Cardiac septum (tissue), 1 donor: ENCODE measurements at regions of chr2 and their contacts with region 1.

Region 1: GRCh38 chr2:187499941-187500532 is 52.0 kb upstream of the CALCRL start:
- DNase-seq: no peak

Region 2: DNA sequence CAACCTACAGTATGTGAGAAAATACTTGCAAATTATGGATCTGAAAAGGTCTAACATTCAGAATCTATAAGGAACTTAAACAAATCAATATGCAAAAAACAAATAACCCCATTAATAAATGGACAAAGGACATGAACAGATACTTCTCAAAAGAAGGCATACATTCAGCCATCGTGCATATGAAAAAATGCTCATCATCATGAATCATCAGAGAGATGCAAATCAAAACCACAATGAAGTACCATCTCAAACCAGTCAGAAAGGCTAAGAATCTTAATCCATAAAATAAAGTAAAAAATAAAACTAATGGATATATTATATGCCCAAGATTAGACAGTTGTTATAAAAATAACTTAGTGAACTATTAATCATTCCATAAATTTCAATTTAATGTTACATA is 206.0 kb before region 1 on chr2:
- intact Hi-C with region 1: no loop called
- DNase-seq: no peak

Region 3: DNA sequence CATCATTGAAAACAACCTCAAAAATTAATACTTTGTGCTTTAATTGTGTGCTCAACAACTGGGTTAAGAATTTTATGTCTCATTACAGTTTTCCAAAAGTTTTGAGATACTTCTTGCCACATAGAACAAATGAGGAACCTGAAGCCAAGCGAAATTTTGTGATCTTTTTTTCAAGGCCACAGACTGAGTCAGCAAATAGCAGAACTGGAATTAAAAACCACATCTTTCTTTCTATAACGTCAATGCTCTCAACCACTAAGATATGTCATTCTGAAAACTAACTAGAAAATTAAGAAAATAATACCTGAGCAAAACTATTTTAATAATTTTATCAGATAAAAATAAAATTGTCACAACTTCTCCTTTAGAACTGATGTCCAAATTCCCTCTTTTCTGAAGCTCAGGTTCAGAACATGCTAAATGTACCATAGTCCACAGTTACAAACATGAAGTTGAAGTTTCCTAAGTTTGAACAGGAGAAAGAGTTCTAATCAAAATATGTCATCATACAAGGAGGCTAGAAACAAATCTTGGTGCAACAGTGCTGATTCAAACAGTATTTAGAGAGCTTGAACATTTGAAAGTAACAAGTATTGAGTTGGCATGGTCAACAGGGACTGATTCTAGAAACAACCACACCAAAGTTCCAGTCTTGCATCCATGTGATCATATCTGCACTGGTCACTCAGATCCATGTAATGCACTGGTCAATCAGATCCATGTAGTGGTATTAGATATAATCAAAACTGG is 24.4 kb before region 1 on chr2:
- intact Hi-C with region 1: no loop called
- DNase-seq: no peak

Region 4: GRCh38 chr2:187486241-187486640 is 13.8 kb before region 1 on chr2:
- intact Hi-C with region 1: no loop called
- DNase-seq: no peak

Region 5: GRCh38 chr2:187541086-187542085 is 41.3 kb after region 1 on chr2:
- intact Hi-C with region 1: loop called (anchors 5 kb)
- DNase-seq: no peak

Region 6: GRCh38 chr2:187581125-187581896 is 81.3 kb after region 1 on chr2:
- intact Hi-C with region 1: loop called (anchors 2 kb)
- DNase-seq: no peak

Region 7: DNA sequence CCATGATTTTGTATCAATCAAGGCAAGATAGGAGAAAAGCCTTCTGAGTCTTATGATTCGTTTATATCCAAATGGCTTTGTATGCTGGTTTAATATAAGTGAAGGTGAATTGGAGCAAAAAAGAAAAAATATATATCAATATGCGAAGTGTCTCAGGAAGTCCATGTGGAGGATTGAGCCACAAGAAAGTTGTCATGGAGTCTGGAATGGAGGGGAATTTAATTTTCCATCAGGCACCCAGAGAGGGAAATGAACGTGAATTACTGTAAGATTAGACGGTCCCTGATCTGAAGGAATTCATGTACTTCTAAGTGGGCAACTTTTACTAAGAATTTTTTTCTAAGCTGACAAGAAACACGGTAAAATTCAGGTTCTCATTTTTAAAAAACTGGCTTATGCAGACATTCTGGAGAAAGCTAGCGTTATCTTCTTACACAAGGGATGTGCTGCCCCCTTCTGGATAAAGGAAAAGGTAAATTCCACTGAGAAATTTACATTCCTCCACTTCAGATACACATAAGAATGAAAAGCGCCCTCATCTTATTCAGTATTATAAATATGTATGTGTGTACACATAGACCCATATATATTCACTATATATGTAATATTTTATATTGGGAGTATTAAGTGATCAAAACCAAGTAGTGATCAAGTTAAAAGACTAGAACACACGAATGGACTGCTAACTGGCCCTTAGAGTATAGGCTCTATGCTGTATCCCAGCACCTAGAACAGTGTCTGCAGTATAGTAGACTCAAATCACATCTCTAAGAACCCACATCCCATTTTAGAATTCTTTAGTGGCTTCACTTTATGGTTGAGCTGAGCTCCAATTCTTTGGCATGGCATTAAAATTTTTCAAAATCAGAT is 343.2 kb after region 1 on chr2:
- intact Hi-C with region 1: loop called (anchors 5 kb)
- DNase-seq: no peak

Region 8: DNA sequence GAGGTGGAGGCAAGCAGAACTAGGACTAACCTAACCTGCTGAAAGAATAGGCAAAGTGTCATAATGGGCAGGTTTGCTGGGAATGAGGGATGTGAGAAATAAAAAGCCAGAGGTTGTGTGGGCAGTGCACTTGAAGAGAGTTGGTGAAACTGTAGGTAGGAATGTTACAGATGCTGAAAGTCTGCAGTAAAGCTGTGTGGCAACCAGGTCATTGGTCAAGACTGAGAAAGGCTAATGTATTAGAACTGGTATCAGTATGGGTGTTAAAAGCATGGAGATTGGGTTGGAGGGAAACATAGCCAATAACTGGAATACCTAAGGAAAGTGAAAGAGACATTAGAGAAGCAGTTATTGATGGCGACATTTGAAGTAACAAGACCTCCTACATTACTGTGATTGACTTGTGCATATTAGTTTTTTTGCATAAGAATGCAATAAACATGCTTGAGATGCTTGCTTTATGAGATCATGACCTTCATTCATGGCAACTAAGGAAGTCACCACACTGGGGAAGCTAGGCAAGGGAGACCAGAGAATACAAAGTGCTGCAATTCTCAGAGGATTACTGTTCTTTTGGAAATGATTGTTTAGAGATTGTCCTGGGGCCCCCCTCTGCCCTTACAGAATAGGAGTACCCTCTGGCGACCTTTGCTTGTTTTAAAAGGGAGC is 803.5 kb after region 1 on chr2:
- intact Hi-C with region 1: no loop called
- DNase-seq: no peak

Region 9: GRCh38 chr2:188512456-188512855 is 1012.4 kb after region 1 on chr2:
- intact Hi-C with region 1: loop called (anchors 10 kb)
- DNase-seq: no peak